Ascending aorta (tissue), 2 donors: ENCODE measurements at regions of chr19 and their contacts with region 1.

Region 1: GRCh38 chr19:9986787-9987281 is 23.5 kb downstream of the COL5A3 start:
- DNase-seq: peak in 1 of 2 donors; percentile 84
- H3K4me3 ChIP-seq: no peak overlapping the region
- H3K27ac ChIP-seq: peak overlapping the region; percentile 63 to 67
- H3K4me1 ChIP-seq: peaks cover 4 to 11% of the 10 kb centered on the region in 2 donors
- H3K27me3 ChIP-seq: no peaks in the 10 kb centered on the region
- CTCF ChIP-seq: no peak

Region 2: DNA sequence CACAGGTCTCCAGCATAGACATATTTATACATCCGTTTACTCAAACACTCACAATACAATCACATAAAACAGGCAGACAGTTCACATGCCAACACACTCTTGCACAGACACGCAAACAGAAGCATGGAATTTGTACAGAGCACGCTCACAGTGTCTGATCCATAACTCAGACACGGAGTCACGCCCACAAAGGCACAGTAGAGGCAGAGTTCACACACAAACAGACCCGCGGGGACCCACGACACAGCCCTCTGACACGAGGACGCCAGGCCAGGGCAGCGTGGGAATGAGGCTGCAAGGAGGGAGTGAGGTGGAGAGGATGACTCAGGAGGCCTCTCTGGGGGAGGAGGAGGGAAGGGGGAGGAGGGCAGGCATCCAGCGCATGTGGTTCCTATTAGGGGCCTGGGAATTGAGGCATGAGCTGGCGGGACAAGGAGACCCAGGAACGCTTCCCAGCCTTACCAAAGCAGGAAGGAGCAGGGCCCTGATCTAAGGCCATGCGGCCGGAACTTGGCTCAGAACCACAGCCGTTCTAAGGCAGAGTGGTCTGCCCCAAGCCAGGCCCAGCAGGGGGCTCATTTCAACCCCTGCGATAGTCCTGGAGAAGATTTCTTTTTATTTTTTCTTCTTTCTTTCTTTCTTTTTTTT is 41.4 kb before region 1 on chr19:
- intact Hi-C with region 1: loop called (anchors 5 kb)
- DNase-seq: peak; percentile 75 to 95
- H3K4me3 ChIP-seq: peak overlapping the region; percentile 26 to 35
- H3K27ac ChIP-seq: peak overlapping the region; percentile 83 to 84
- H3K4me1 ChIP-seq: peaks cover 3 to 19% of the 10 kb centered on the region in 2 donors
- H3K27me3 ChIP-seq: no peaks in the 10 kb centered on the region
- CTCF ChIP-seq: no peak